Activated CD4-positive, alpha-beta T cell treated with anti-CD3 and anti-CD28 coated beads, Interleukin-2, amount 10 ng/mL, durations not matched to agents 24 days and 14 days (primary cell): ENCODE measurements at regions of chr7 and their contacts with region 1.

Region 1: DNA sequence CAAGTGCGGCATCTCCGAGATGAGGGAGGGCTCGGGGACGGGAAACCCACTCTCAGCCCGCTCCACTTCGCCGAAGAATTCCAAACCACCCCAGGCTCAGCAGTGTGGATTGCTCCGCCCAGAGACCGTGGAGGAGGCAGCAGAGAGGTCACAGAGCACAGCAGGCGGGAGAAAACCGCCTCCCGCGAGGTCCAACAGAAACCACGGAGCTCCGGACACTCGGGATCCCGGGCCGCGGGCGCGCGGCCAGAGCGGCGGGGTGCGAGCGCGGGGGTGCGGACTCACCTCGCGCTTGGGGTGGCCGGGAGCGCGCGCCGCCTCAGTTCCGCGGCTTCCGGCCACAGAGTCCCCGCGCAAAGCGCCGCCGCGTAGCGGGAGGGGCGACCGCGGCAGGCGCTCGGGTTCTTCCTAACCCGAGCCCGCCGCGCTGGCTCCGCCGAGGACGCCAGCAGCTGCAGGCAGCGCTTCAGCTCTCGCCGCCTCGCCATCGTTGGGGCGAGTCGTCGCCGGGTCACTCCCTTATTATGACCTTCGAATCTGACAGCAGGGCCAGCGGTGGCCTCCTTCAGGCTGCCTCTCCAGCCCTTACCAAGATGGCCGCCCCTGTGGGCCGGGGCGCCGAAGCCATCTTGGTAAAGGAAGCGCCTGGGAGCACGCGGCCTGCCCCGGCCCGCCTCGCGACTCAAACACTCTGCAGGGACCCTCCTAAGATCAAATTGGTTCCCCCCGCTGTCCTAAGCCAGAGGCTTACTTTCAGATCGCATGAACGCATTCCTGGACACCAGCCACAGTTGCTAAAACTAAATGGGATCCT is at the start of gene NAPEPLD:
- DNase-seq: peak; percentile 91
- H3K4me3 Mint-ChIP-seq: peak within 1 kb of the TSS; percentile 98
- H3K27ac Mint-ChIP-seq: peak within 1 kb of the TSS; percentile 99
- H3K4me1 Mint-ChIP-seq: peaks cover 31% of the 10 kb centered on the region
- H3K27me3 Mint-ChIP-seq: no peaks in the 10 kb centered on the region
- total RNA-seq, gene NAPEPLD: 8.8 and 10.1 TPM in 2 replicates

Region 2: DNA sequence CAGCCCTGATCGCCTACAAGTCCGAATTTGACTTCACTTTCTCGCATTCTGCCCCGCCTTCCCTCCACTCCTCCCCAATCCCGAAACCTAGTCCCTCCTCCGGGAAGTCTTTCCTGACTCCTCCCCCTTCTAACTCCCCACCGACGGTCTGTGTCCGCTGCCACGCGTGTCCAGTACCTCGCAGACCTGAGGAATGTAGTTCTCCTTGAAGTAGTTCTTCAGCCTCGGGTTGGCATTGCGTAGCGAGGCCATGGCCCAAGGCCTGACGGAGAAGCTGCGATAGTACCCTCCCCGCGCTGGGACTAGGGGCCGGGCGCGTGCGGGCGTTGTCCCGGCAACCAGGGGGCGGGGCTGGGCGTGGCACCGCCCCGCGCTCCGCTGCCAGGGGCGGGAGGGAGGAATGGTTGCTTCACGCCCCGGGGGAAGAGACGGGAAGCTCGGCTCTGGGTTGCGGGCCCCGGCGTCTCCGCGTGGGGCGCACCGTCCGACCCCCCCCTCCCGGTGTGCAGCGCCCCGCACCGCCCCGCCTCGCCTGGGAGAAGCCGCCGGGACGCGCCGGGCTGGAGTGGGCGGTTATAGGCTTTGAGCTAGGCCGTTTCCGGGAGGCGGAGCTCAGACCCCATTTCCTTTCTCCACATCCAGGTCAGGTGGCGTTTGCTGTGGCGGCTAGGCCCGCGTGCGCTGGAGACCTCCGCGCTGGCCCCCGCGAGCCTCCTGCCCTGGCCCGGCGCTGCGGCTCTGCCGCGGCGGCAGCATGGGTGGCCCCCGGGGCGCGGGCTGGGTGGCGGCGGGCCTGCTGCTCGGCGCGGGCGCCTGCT is 74.5 kb before region 1 on chr7 and contains the starts of genes ARMC10 and FBXL13:
- intact Hi-C with region 1: loop called (anchors 1 kb)
- DNase-seq: peak; percentile 96
- H3K4me3 Mint-ChIP-seq: peak within 1 kb of the TSS; percentile 95
- H3K27ac Mint-ChIP-seq: peak within 1 kb of the TSS; percentile 92
- H3K4me1 Mint-ChIP-seq: peaks cover 28% of the 10 kb centered on the region
- H3K27me3 Mint-ChIP-seq: no peaks in the 10 kb centered on the region
- total RNA-seq, gene ARMC10: 53.4 and 56.5 TPM in 2 replicates
- total RNA-seq, gene FBXL13: 0.09 and 0.99 TPM in 2 replicates

Region 3: DNA sequence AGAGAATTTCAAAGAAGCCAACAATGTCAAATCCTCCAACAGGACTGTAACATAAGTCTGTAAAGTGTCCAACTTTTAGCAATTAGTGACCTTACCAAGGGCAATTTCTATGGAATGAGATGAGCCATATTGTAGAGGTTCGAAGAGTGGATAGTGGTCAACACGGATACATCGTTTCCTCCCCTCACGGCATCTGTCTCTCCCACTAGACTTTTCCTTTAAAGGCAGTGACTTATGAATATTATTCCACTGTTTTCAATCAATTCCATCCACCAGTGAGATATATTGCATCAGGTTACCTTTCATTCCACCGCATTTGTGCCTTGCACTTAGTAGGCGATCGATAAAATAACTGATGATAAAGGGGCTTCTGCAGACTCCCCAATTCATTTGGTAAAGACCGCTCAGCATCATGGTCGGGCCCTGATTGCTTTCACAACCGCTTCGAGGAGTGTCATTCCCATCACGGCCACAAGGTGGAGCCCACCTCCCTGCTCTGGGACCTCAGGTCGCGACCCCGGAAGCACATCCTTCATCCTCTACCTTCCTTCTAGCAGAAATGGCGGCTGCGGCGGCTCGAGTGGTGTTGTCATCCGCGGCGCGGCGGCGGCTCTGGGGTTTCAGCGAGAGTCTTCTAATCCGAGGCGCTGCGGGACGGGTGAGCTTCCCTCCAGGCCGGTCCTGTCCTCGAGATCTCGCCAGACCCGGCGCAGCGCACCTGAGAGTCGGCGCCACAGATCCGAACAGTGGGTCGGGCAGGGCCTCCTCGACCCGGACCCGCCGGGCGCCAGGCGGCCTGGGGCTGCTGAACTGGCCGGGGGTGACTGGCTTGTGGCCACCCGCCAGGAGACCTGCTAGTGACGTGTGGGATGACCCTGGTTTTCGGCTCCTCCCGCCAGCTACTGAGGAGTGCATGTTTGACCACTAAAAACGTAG is 148.0 kb after region 1 on chr7 and contains the start of gene PMPCB:
- intact Hi-C with region 1: loop called (anchors 1 kb)
- DNase-seq: peak; percentile 99
- H3K4me3 Mint-ChIP-seq: peak within 1 kb of the TSS; percentile 99
- H3K27ac Mint-ChIP-seq: peak within 1 kb of the TSS; percentile 95
- H3K4me1 Mint-ChIP-seq: peaks cover 27% of the 10 kb centered on the region
- H3K27me3 Mint-ChIP-seq: peaks cover 16% of the 10 kb centered on the region
- total RNA-seq, gene PMPCB: 73.1 and 75.9 TPM in 2 replicates